AG04449 (cell line): ENCODE measurements at regions of chr2 and their contacts with region 1.

Region 1: GRCh38 chr2:134782792-134783191 is 55.6 kb upstream of the ACMSD start:
- DNase-seq: no peak
- H3K4me3 ChIP-seq: no peak overlapping the region
- CTCF ChIP-seq: peak; percentile 23

Region 2: GRCh38 chr2:134897932-134898331 is 115.1 kb after region 1 on chr2:
- CTCF ChIA-PET with region 1: interaction called, 11 read pairs
- POLR2A ChIA-PET with region 1: no interaction called
- DNase-seq: no peak
- H3K4me3 ChIP-seq: no peak overlapping the region
- CTCF ChIP-seq: no peak